Spleen (tissue), 13 donors: ENCODE measurements at regions of chr19 and their contacts with region 1.

Region 1: DNA sequence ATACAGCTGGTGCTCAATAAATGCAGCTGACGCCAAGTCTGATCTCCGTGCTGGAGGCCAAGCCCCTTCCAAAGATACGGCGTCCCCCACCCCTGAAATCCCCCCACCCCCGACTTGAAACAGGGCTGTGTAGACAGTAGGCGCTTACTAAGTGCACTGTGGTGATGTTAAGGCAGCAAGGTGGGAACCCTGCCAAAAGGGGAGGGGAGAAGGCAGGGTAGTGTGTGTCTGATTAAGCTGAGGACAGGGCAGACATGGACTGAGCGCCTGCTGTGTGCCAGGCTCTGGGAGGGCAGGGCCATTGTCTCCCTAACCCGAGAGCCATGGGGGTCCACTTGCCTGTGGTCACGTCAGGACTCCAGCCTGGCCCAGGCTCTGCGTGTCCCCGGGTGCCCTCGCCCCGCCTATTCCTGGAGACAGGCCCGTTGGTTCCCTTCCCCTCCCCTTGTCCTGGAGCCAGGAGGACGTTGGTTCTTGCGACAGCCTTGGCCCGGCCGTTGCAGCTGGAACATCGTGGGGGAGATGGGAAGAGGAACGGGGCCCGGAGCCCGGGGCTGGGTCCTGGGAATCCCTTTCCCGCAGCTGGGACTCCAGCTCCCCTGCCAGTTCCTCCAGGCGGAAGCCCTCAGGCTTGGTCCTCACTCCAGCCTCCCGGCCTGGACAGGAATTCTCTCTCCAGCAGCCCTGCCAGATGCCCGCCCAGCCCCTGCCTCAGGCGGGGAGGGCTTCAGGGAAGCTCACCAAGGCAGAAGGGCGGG is 1.7 kb upstream of the ELANE start:
- DNase-seq: peak; percentile 81
- H3K4me3 ChIP-seq: peak overlapping the region in 1 of 8 donors; percentile 5
- H3K27ac ChIP-seq: peak overlapping the region in 7 of 8 donors; percentile 60 to 82 (median 79)
- H3K4me1 ChIP-seq: peaks cover 0 to 60% (median 30%) of the 10 kb centered on the region in 6 donors
- H3K27me3 ChIP-seq: peaks cover 0 to 97% (median 55%) of the 10 kb centered on the region in 7 donors
- CTCF ChIP-seq: no peak
- POLR2A ChIP-seq: no peak

Region 2: DNA sequence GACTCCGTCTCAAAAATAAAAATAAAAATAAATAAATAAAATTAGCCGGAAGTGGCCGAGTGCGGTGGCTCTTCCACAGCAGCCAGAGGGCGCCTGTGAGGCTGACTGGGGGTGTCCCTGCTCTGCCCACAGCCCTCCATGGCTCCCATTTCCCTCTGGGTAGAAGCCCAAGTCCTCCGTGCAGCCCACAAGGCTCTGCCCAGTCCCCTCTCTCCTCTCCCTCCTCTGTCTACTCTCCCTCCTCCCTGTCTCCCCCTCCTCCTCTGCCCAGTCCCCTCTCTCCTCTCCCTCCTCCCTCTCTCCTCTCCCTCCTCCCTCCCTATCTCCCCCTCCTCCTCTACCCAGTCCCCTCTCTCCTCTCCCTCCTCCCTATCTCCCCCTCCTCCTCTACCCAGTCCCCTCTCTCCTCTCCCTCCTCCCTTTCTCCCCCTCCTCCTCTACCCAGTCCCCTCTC is 79.0 kb before region 1 on chr19:
- intact Hi-C with region 1: loop called (anchors 10 kb)
- DNase-seq: no peak
- H3K4me3 ChIP-seq: no peak overlapping the region
- H3K27ac ChIP-seq: no peak overlapping the region
- H3K4me1 ChIP-seq: peaks cover 0 to 14% (median 11%) of the 10 kb centered on the region in 6 donors
- H3K27me3 ChIP-seq: peaks cover 0 to 19% (median 0%) of the 10 kb centered on the region in 7 donors
- CTCF ChIP-seq: peak in 10 of 11 experiments; percentile 27 to 66 (median 46)
- POLR2A ChIP-seq: no peak

Region 3: DNA sequence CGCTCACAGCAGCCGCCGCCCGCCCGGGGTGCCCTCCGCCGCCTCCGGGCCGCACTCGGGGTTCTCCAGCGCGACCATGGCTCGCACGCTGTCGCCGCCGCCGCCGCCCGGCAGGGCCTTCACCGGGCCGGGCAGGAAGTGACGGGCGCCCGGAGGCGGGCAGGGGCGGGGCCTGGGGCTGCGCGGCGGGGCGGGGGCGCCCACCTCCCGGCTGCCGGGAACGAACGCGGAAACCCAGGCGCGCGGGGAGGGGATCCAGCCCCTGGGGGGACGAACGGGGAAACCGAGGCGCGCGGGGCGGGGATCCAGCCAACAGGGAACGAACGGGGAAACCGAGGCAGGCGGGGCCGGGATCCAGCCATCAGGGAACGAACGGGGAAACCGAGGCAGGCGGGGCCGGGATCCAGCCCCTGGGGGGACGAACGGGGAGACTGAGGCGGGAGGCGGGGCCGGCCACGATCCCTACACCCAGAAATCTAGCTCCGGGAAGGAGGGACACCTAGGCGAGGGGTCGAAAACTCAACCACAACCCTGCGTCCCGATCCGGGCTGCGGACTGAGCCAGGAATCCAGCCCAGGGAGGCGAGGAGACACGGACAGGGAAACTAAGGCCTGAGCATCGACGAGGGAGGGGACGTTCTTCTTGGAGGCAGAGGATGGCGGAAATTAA is 62.8 kb after region 1 on chr19 and contains the start of gene R3HDM4:
- intact Hi-C with region 1: no loop called
- DNase-seq: peak; percentile 98
- H3K4me3 ChIP-seq: peak within 1 kb of the TSS; percentile 44 to 84 (median 58)
- H3K27ac ChIP-seq: peak within 1 kb of the TSS; percentile 94 to 99 (median 98)
- H3K4me1 ChIP-seq: peaks cover 33 to 85% (median 63%) of the 10 kb centered on the region in 6 donors
- H3K27me3 ChIP-seq: peaks cover 4 to 24% (median 18%) of the 10 kb centered on the region in 7 donors
- CTCF ChIP-seq: peak in 1 of 11 experiments; percentile 10
- POLR2A ChIP-seq: peak in 2 of 3 donors; percentile 17 to 27
- total RNA-seq, gene R3HDM4: 41.0 to 175 (median 90.9) TPM